Sigmoid colon (tissue), 7 donors: ENCODE measurements at regions of chr15 and their contacts with region 1.

Region 1: DNA sequence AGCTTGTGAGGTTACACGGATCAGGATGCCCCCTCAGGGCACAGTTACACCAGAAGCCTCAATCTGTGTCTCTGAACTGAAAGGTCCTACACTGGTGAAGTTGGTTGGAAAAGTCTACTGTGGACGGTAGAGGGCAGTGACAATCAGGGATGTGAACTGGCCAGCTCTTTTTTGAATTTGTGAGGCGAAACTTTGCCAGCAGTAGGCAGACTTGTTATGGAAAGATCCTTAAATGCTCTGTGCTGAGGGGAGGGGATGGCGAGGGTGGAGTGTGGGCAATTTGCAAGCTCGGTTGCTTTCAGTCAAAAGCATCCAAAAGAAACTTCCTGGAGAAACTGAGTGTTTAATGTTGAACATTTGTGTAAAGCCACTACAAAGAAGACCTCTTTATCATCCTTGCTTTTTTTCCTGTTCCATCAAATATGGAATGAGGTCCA is 127.4 kb upstream of the ABHD17C start:
- DNase-seq: peak; percentile 67
- H3K4me3 ChIP-seq: no peak overlapping the region
- H3K27ac ChIP-seq: no peak overlapping the region
- H3K4me1 ChIP-seq: peaks cover 0 to 5% (median 2%) of the 10 kb centered on the region in 4 donors
- H3K27me3 ChIP-seq: no peaks in the 10 kb centered on the region
- CTCF ChIP-seq: peak; percentile 25 to 72 (median 62)
- EP300 ChIP-seq: no peak
- POLR2A ChIP-seq: no peak

Region 2: DNA sequence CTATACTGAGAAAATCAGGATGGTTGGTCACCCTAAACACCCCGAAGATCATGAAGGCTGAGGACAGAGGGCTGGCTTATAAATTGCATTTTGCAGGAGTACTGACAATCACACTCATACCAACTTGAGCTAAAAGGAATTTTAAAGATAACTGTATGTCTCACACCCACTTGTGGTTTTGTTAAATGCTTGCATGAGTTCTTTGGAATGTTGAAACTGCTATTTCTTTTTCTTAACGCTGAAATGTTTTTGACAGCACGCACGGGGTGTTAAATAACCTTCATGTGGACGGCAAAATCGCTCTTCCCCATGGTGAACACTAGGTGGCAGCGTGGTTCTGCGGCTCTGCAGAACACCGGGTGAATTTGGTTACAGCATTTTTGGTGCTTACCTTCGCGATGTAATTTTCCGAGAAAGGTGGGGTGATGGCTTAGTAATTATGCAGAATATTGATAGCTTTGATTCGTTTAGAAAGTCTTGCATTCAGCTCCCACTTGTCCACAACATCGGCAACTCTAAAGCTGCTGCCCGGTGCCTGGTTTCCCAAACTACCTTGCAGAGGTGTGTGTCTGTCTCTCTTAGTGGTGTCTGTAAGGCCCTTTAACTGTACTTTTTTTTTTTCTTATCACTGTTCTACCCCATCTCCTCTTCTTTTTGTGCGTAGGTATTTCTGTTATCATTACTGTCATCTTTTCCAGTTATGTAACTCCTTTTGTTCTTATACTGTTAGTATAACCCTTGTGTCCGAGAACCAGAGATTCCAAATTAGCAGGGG is 111.9 kb before region 1 on chr15:
- intact Hi-C with region 1: loop called (anchors 2 kb)
- DNase-seq: peak; percentile 74
- H3K4me3 ChIP-seq: no peak overlapping the region
- H3K27ac ChIP-seq: no peak overlapping the region
- H3K4me1 ChIP-seq: peaks cover 0 to 18% (median 9%) of the 10 kb centered on the region in 4 donors
- H3K27me3 ChIP-seq: no peaks in the 10 kb centered on the region
- CTCF ChIP-seq: peak; percentile 68 to 89 (median 88)
- EP300 ChIP-seq: no peak
- POLR2A ChIP-seq: no peak

Region 3: GRCh38 chr15:80480909-80481308 is 86.8 kb before region 1 on chr15:
- intact Hi-C with region 1: no loop called
- DNase-seq: peak; percentile 88
- H3K4me3 ChIP-seq: no peak overlapping the region
- H3K27ac ChIP-seq: peak overlapping the region; percentile 37 to 70 (median 61)
- H3K4me1 ChIP-seq: peaks cover 0 to 63% (median 48%) of the 10 kb centered on the region in 4 donors
- H3K27me3 ChIP-seq: no peaks in the 10 kb centered on the region
- CTCF ChIP-seq: no peak
- EP300 ChIP-seq: peak in 1 of 4 donors; percentile 5
- POLR2A ChIP-seq: no peak

Region 4: GRCh38 chr15:80523746-80524145 is 44.0 kb before region 1 on chr15:
- intact Hi-C with region 1: no loop called
- DNase-seq: no peak
- H3K4me3 ChIP-seq: no peak overlapping the region
- H3K27ac ChIP-seq: no peak overlapping the region
- H3K4me1 ChIP-seq: no peaks in the 10 kb centered on the region
- H3K27me3 ChIP-seq: no peaks in the 10 kb centered on the region
- CTCF ChIP-seq: no peak
- EP300 ChIP-seq: no peak
- POLR2A ChIP-seq: no peak

Region 5: DNA sequence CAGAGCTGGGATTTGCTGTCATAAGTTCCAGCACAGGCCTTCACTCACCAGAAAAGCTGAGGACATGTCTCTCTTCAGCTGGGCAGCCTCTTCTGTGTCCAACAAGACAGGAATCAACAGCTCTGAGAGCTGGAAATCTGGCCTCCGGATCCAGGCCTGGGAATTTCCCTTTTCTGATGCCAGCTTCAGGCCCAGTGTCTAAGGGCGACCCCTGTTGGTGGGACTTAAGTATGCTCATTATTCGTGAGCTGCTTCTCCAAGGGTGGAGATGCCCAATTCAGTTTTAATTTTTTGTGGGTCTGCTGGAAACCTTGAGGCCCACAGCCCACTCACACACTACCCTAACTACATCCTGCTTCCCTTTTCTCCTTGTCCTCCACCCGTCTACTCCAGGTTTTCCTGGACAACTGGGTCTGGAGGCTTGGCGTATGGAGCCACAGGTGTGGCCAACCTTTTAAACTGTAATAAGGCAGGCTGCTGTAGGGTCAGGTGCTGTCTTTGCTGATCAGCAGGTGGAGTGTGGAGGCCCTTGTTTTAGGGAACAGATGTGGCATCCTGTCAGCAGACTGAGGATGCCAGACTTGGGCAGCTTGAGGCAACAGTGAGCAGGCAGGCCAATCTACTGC is 208.8 kb after region 1 on chr15:
- intact Hi-C with region 1: loop called (anchors 2 kb)
- DNase-seq: peak; percentile 82
- H3K4me3 ChIP-seq: no peak overlapping the region
- H3K27ac ChIP-seq: no peak overlapping the region
- H3K4me1 ChIP-seq: peaks cover 0 to 30% (median 24%) of the 10 kb centered on the region in 4 donors
- H3K27me3 ChIP-seq: peaks cover 0 to 25% (median 4%) of the 10 kb centered on the region in 3 donors
- CTCF ChIP-seq: peak; percentile 65 to 83 (median 82)
- EP300 ChIP-seq: no peak
- POLR2A ChIP-seq: no peak

Region 6: DNA sequence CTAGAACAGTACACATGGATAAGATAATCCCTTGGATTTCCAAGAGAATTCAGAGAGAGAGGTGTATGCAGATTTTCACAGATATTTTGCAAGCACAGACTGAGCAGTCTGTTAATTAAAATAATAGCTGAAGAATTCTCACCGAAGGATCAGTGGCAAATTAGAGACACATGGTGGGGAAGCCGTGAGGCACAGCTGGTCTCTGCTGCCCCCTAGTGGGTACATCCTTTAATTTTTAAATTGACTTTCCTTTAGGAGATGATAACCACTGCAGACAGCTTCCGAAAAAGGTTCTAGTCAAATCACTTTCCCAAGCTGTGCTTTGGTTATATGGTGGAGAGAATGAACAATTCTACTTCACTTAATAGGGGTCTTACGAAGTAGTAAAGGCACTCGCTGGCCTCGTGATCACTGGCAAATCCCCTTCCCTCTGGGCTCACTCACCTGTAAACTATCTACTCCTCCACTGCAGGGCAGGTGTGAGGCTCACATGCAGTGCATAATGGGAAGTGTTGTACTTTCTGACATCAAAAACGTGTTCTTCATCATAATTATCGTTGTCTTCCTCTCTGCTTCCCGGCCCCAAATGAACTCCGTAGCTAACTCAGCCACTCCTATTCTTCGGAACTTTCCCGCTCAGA is 402.4 kb after region 1 on chr15:
- intact Hi-C with region 1: loop called (anchors 5 kb)
- DNase-seq: no peak
- H3K4me3 ChIP-seq: no peak overlapping the region
- H3K27ac ChIP-seq: no peak overlapping the region
- H3K4me1 ChIP-seq: peaks cover 0 to 24% (median 16%) of the 10 kb centered on the region in 4 donors
- H3K27me3 ChIP-seq: no peaks in the 10 kb centered on the region
- CTCF ChIP-seq: peak; percentile 53 to 88 (median 76)
- EP300 ChIP-seq: no peak
- POLR2A ChIP-seq: no peak

Region 7: DNA sequence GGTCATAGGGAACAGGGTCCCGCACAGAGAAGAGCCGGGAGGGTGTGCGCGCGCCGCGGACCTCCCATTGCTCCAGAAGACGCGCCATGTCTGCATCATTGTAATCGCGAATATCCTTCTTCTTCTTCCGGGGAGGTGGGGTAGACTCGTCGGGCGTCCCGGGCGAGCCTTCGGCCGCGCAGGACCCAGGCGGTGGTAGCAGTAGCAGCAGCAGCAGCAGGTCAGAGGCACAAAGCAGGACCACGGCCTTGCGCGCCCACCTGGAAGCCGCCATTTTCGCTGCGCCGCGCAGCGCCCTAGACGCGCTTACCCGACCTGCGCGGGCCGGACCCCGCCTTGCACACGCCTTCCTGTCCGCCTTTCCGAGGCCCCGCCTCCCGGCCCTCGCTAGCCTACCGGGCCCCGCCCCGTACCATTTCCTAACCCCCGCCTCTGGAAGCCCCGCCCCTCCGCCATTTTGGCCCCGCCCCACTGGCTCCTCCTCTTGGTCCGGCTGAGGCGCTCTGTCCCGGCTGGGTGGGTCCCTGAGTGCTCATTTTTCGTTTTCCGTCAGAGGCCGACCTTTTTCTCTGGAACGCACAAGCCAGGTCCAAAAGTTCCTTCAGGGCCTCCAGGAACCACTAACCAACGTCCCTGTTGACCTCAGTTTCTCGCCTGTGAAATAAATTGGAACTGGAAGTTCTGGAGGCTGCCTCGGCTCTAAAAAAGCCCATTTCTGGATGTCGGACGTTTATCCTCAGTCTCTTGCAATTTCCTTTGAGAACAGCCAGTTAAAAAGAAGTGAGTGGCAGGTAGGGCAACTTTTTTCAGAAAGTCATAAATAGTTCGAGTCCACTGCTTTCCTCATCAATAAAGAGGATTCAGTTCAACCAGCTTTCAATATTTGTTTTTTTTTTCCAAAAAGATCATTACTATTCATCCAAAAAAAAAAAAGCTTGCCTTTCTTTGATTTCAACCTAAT is 422.1 kb after region 1 on chr15 and contains the start of gene MESD:
- intact Hi-C with region 1: no loop called
- DNase-seq: peak; percentile 99
- H3K4me3 ChIP-seq: peak within 1 kb of the TSS; percentile 69 to 92 (median 87)
- H3K27ac ChIP-seq: peak within 1 kb of the TSS; percentile 89 to 94 (median 92)
- H3K4me1 ChIP-seq: peaks cover 0 to 46% (median 34%) of the 10 kb centered on the region in 4 donors
- H3K27me3 ChIP-seq: no peaks in the 10 kb centered on the region
- CTCF ChIP-seq: no peak
- EP300 ChIP-seq: no peak
- POLR2A ChIP-seq: peak; percentile 72 to 73
- total RNA-seq, gene MESD: 11.7 to 20.8 (median 15.7) TPM

Region 8: GRCh38 chr15:81523867-81524266 is 956.1 kb after region 1 on chr15:
- intact Hi-C with region 1: no loop called
- DNase-seq: no peak
- H3K4me3 ChIP-seq: no peak overlapping the region
- H3K27ac ChIP-seq: no peak overlapping the region
- H3K4me1 ChIP-seq: no peaks in the 10 kb centered on the region
- H3K27me3 ChIP-seq: no peaks in the 10 kb centered on the region
- CTCF ChIP-seq: no peak
- EP300 ChIP-seq: no peak
- POLR2A ChIP-seq: no peak